ENCODE measurements at regions of chr11 and their contacts with region 1.

Region 1: DNA sequence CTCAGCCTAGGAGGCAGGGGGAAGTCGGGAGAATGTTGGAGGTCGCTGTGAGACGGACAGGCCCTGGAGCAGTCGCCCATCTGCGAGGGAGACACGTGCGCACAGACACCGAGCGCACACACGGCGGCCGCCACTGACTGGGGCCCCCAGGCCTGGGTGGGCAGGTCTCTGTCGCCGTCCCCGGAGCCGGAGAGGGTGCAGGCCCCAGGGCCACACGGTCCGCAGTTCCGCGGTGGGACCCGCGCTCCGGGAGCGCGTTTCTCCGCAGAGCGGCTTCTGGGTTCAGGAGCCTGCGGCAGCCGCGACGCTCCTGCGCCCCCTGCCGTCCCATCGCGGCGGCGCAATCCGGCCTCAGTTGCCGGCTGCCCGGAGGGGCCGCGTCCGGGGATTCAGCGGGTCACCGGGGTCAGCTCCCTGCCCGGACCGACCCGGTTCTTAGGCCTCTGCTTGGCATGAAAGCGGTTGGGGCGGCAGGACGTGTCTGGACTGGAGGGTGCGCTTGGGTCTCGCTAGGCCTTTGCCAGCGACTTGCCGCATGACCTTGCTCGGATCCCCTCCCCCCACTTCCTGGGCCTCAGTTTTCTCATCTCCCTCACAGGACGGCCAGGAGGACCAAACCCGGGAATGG is 31.2 kb downstream of the PDE2A start:
- DNase-seq: peak; percentile 84
- ATAC-seq: peak; percentile 86

Region 2: GRCh38 chr11:72585762-72586311 is 57.2 kb before region 1 on chr11:
- intact Hi-C with region 1: loop called (anchors 5 kb)
- DNase-seq: peak; percentile 70
- ATAC-seq: peak; percentile 71